K562 (cell line): ENCODE measurements at regions of chr10 and their contacts with region 1.

Region 1: DNA sequence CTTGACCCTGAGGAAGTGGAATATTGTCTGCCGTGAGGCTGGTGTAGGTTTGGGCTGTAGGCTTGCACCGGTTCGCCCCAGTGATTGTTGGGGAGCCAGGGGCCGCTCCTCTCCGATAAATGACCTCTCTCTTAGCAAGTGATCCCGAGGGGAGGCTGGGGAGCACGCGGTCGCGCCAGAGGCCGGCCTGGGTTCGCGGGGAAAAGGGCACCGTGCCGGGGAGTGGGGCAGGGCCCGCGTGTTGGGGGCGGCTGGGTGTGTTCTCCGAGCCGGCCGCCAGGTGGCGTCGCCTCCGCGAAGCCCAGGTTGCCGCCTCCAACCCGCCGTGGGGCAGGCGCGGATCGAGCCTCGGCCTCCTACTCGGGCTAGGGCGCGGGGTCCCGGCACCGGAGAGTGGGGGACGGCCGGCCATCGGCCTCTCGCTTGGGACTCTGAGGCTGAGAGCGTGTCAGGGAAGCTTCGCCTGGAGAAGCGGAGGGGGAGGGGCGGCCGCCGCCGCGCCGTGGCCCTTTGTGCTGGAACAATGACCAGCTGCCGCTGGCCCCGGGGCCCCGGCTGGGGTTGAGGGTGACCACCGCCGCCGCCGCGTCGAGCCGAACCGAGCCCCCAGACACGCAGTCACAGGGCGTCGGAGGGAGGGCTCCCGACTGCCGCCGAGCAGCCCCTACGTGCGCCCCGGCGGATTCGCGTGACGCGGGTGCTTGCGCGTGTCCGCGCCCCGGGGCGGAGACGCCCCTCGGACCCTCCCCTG is 442 bp upstream of the LZTS2 start:
- DNase-seq: peak; percentile 55 to 82 (median 71)
- ATAC-seq: peak; percentile 72
- H3K4me3 ChIP-seq: peak overlapping the region; percentile 76
- H3K27ac ChIP-seq: peak overlapping the region; percentile 93
- H3K4me1 ChIP-seq: peaks cover 26 to 81% of the 10 kb centered on the region in 2 experiments; a peak in 4 of 5 replicates
- H3K27me3 ChIP-seq: no peaks in the 10 kb centered on the region
- CTCF ChIP-seq: peak; percentile 62 to 80 (median 69)
- EP300 ChIP-seq: no peak
- POLR2A ChIP-seq: peak; percentile 69
- RAD21 ChIP-seq: peak; percentile 36 to 55; a peak in 3 of 4 replicates

Region 2: GRCh38 chr10:102040305-102041050 is 1041.3 kb after region 1 on chr10:
- CTCF ChIA-PET with region 1: no interaction called
- POLR2A ChIA-PET with region 1: no interaction called
- in situ Hi-C with region 1: loop called (anchors 25 kb)
- intact Hi-C with region 1: no loop called
- DNase-seq: peak in 3 of 4 experiments; percentile 2 to 4 (median 3)
- ATAC-seq: no peak
- H3K4me3 ChIP-seq: no peak overlapping the region
- H3K27ac ChIP-seq: no peak overlapping the region
- H3K4me1 ChIP-seq: no peaks in the 10 kb centered on the region; a peak in 3 of 5 replicates
- H3K27me3 ChIP-seq: no peaks in the 10 kb centered on the region
- CTCF ChIP-seq: no peak
- EP300 ChIP-seq: no peak
- POLR2A ChIP-seq: no peak
- RAD21 ChIP-seq: no peak